ENCODE measurements at regions of chr19 and their contacts with region 1.

Region 1: DNA sequence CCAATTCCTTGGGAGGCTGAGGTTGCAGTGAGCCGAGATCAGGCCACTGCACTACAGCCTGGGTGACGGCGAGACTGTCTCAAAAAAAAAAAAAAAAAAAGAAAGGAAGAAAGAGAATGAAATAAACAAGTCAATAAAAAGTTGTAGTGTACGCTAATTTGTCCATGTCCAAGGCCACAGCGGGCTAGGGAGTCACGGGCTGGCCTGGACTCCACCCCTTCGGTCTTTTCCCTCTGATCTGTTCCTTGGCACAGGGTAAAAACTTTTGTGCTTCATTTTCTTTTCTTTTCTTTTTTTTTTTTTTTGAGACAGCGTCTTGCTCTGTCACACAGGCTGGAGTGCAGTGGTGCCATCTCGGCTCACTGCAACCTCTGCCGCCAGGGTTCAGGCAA is 19.4 kb upstream of the MKNK2 start:
- DNase-seq: no peak
- ATAC-seq: no peak
- H3K4me3 Mint-ChIP-seq: no peak overlapping the region
- H3K27ac Mint-ChIP-seq: no peak overlapping the region
- H3K4me1 Mint-ChIP-seq: peaks cover 27% of the 10 kb centered on the region
- H3K27me3 Mint-ChIP-seq: no peaks in the 10 kb centered on the region

Region 2: GRCh38 chr19:2021453-2022140 is 48.8 kb before region 1 on chr19:
- CTCF ChIA-PET with region 1: interaction called, 17 read pairs
- POLR2A ChIA-PET with region 1: interaction called, 4 read pairs
- DNase-seq: no peak
- ATAC-seq: no peak
- H3K4me3 Mint-ChIP-seq: no peak overlapping the region
- H3K27ac Mint-ChIP-seq: no peak overlapping the region
- H3K4me1 Mint-ChIP-seq: peaks cover 4% of the 10 kb centered on the region
- H3K27me3 Mint-ChIP-seq: peaks cover 3% of the 10 kb centered on the region

Region 3: DNA sequence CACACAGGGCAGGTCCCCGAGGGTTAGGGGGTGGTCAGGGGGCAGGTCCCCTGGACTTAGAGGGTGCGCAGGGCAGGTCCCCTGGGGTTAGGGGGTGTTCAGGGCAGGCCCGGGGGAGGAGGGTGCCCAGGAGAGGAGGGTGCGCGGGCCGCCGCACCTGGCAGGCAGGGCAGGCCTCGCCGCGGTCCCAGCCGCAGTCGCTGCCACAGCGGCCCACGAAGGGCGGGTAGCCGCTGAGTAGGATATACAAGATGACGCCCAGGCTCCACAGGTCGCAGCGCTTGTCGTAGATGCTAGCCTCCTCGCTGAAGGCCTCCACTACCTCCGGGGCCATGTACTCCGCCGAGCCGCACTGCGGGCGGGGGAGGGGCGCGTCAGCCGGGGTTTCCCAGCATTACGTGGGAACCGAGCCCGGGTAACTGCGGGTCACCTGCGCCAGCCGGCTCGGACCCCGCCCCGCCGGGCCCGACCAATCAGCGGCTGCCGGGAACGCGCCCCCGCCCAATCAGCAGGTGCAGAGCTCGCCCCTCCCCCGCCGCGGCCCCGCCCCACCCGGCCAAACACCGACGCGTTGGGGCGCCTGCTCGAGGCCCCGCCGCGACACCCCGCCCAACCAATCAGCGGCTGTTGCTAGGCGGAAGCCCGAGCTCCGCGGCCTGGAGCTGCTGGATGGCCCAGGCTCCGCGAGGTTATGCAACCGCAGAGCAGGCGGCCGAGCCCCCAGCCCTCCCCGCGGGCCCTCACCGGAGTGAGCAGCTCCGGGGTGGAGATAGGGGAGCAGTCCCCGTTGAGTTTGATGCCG is 28.5 kb before region 1 on chr19:
- CTCF ChIA-PET with region 1: interaction called, 15 read pairs
- POLR2A ChIA-PET with region 1: no interaction called
- DNase-seq: peak; percentile 99
- ATAC-seq: peak; percentile 89
- H3K4me3 Mint-ChIP-seq: peak overlapping the region; percentile 66
- H3K27ac Mint-ChIP-seq: peak overlapping the region; percentile 87
- H3K4me1 Mint-ChIP-seq: peaks cover 29% of the 10 kb centered on the region
- H3K27me3 Mint-ChIP-seq: no peaks in the 10 kb centered on the region

Region 4: DNA sequence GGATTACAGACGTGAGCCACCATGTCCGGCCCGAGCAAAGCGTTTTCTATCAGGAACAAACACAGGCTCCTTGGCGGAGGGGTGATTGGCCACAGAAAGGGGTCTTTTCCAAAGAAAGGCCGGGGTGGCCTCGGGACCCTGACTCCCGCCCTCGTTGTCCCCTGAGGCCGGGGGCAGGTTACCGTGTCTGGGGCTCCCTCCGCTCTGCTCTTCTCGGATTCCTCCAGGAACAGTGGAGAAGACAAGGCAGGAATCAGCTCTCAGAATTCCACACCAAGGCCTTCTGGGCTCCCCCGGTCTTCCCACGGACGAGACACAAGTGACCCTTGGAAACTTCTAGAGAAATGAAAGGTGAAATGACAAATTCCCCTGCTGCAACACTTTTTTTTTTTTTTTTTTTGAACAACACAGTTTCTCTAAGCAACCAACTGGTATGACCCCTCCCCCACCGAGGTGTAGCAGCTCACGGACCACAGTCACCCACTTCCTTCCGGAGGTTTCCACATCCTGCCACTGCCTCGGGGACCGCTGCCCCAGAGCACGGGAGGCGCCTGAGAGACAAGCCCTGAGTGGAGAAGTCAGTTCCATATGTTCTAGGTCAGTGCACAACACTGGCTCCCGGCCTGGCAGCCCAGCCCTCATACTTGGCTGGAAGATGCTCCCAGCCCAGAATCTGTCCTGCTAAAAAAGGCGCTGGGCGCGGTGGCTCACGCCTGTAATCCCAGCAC is 14.7 kb after region 1 on chr19:
- CTCF ChIA-PET with region 1: interaction called, 16 read pairs
- POLR2A ChIA-PET with region 1: interaction called, 9 read pairs
- DNase-seq: peak; percentile 98
- ATAC-seq: peak; percentile 63
- H3K4me3 Mint-ChIP-seq: peak overlapping the region; percentile 99
- H3K27ac Mint-ChIP-seq: peak overlapping the region; percentile 98
- H3K4me1 Mint-ChIP-seq: peaks cover 62% of the 10 kb centered on the region
- H3K27me3 Mint-ChIP-seq: no peaks in the 10 kb centered on the region

Region 5: DNA sequence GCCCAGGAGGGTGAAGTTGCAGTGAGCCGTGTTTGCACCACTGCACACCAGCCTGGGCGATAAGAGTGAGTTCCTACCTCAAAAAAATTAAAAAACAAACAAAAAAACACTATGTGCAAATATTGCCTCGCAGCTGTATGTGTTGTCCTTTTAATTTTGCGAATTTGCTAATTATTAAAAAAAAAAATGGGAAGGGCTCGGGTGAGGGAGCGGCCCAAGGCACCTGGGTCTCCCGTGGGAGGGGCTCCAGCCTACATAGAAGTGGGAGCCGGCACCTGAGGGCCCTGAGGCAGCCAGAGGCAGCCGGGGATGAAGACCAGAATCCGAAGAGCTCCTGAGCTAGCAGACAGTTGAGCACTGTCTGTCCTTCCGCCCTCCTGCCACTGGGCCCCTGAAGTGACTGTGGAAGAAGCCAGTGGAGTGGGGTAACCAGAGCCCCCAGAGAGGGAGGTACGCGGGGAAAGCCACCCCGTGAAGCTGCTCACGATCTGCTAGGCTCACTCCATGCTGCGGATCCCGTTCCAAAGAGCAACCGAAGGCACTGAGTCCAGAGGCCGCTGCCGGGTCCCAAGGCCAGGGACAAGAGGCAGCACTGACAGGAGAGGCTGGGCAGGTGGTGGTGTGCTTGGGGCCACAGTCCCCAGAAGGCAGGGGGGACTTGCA is 32.7 kb after region 1 on chr19:
- CTCF ChIA-PET with region 1: no interaction called
- POLR2A ChIA-PET with region 1: no interaction called
- DNase-seq: no peak
- ATAC-seq: no peak
- H3K4me3 Mint-ChIP-seq: no peak overlapping the region
- H3K27ac Mint-ChIP-seq: no peak overlapping the region
- H3K4me1 Mint-ChIP-seq: no peaks in the 10 kb centered on the region
- H3K27me3 Mint-ChIP-seq: no peaks in the 10 kb centered on the region